HAP-1 (cell line): ENCODE measurements at regions of chr20 and their contacts with region 1.

Region 1: DNA sequence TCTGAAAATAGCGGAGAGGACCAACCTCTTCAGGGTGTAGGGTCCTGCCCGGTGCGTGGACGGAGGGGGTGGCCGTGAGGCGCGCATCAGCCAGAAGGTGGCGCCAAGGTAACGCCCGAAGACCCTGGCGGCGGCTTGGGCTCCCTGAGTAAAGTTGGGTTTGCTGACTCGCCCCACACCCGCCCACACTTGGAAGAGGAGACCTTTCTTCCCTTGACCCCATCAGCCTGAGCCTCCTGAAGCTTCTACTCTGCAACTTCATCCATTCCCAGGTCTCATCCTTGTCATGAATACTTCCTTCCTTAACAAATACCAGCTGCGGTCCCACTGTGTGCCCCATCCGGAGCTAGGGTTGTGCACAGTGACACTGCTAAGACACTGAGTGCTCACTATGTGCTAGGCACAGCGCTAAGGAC is 14.6 kb downstream of the CD40 start:
- DNase-seq: peak; percentile 59 to 85
- H3K4me3 ChIP-seq: no peak overlapping the region
- H3K4me1 ChIP-seq: no peaks in the 10 kb centered on the region
- H3K27me3 ChIP-seq: peaks cover 33% of the 10 kb centered on the region; the same call in 1 of the 2 replicates

Region 2: DNA sequence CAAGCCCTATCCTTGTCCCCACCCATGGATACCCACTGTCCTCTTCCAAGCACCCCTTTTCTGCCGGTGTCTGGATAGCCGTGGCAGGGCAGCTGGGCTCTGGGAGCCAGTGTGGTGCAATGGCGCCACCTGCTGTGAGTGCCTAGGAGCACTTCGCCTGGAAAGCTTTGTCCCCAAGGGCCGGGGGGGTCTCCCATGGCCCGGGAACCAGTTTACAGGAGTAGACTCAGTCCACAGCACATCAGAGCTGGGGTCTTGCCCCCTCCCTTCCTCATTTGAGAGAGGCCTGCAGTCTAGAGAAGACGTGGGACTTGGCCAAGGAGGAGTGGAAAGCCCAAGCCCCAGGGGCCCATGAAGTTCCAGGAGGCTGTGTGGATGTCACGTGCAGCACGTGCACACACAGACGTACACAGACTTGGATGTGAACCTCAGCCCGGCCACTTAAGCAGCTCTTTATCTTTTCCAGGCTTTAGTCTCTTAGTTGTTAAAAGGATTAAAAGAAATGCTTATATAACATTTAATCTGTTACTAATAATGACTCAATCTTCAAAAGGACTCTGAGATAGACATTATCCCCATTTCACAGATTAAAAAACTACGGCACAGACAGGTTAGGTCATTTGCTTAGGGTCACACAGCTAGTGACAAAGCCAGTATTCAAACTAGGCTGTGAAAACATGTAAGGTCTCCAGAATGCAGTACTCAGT is 216.5 kb after region 1 on chr20:
- in situ Hi-C with region 1: loop called (anchors 25 kb)
- DNase-seq: peak in 1 of 2 experiments; percentile 73
- H3K4me3 ChIP-seq: no peak overlapping the region
- H3K4me1 ChIP-seq: peaks cover 2% of the 10 kb centered on the region; the same call in 1 of the 2 replicates
- H3K27me3 ChIP-seq: peaks cover 5% of the 10 kb centered on the region